Ascending aorta (tissue), 2 donors: ENCODE measurements at regions of chr15 and their contacts with region 1.

Region 1: GRCh38 chr15:41660235-41661077 is at the start of gene MGA:
- DNase-seq: peak; percentile 69 to 94
- H3K4me3 ChIP-seq: peak within 1 kb of the TSS; percentile 66 to 67
- H3K27ac ChIP-seq: peak within 1 kb of the TSS; percentile 82 to 85
- H3K4me1 ChIP-seq: peaks cover 0 to 14% of the 10 kb centered on the region in 2 donors
- H3K27me3 ChIP-seq: no peaks in the 10 kb centered on the region
- CTCF ChIP-seq: peak in 2 of 3 experiments; percentile 13 to 15
- total RNA-seq, gene MGA: 25.3 TPM

Region 2: GRCh38 chr15:41603941-41604911 is 56.2 kb before region 1 on chr15:
- intact Hi-C with region 1: loop called (anchors 1 kb)
- DNase-seq: peak in 1 of 2 donors; percentile 81
- H3K4me3 ChIP-seq: peak overlapping the region; percentile 34 to 53
- H3K27ac ChIP-seq: no peak overlapping the region
- H3K4me1 ChIP-seq: peaks cover 0 to 3% of the 10 kb centered on the region in 2 donors
- H3K27me3 ChIP-seq: no peaks in the 10 kb centered on the region
- CTCF ChIP-seq: peak; percentile 44 to 83 (median 72)

Region 3: DNA sequence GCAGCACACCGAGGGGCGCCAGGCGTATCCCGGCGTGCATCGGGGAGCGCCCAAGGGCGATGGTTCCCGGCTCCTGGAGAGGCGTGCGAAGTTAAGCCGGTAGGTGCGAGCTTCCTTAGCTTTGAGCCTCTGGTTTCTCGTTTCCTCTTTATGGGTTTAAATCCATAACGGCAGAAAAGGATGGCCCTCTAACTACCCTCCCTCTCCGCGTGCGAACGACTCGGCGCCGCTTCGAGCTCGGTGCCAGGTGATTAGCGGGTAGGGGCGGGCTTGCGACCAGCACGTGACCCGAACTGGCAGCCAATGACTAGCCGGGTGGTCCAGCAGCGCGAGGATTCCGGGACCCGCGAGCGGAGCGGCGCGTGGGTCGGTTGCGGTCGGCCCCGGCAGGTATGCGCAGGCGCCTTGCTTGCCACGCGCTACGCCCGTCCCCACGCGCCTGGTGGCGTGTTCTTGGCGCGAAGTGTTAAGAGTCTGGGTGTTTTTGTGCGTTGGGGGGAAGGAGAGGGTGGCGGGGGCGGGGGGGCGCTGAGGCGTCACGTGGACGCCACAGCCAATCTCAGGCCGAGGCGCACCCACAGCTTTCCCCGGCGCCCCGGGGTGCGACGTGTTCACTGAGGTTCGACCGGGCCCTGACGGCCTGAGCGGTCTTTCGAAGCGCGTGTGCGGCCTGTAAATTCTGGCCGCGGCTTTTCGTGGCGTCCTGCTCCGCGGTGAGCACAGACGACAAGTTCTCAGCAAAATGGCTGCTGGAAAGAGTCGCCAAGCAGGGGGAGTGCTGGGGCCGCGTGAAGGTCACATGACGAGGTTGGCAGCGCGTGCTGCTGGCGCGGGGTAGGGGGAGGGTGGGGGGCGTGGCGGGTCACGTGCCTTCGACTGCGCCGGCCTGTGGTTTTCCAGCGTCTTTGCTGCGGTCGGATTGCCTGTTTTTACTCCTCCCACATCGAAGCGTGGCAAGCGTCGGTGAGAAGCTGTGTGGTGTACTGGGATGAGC is 39.0 kb before region 1 on chr15:
- intact Hi-C with region 1: loop called (anchors 1 kb)
- DNase-seq: peak; percentile 17 to 86
- H3K4me3 ChIP-seq: peak overlapping the region; percentile 61 to 77
- H3K27ac ChIP-seq: peak overlapping the region; percentile 83
- H3K4me1 ChIP-seq: peaks cover 0 to 8% of the 10 kb centered on the region in 2 donors
- H3K27me3 ChIP-seq: no peaks in the 10 kb centered on the region
- CTCF ChIP-seq: no peak

Region 4: GRCh38 chr15:41782371-41783282 is 122.2 kb after region 1 on chr15:
- intact Hi-C with region 1: no loop called
- DNase-seq: no peak
- H3K4me3 ChIP-seq: no peak overlapping the region
- H3K27ac ChIP-seq: no peak overlapping the region
- H3K4me1 ChIP-seq: peaks cover 0 to 6% of the 10 kb centered on the region in 2 donors
- H3K27me3 ChIP-seq: no peaks in the 10 kb centered on the region
- CTCF ChIP-seq: no peak